ENCODE measurements at regions of chr10 and their contacts with region 1.

Region 1: DNA sequence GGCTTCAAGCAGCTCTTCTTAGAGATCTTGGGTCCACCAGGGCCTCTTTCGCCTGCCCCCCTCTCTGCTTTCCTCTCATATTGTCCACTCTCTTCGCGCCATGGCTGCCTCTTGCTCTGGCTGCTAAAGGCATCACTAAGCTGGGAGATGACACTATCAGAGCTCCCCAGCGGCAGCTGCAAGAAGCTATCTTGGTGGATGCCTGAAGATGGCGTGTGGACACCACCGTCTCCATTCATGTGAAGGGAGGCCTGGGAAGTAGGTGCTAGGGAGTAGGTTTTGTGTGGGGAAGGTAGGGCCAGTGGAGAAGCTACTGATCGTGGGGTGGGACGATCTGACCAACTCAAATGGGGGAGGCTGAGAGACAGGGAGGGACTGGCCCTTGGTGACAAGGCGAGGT is 45.9 kb upstream of the PDLIM1 start:
- DNase-seq: no peak
- H3K4me3 ChIP-seq: no peak overlapping the region
- H3K27ac ChIP-seq: no peak overlapping the region
- H3K4me1 ChIP-seq: peaks cover 0 to 6% (median 0%) of the 10 kb centered on the region in 4 experiments; a peak in 1 of 7 replicates
- H3K27me3 ChIP-seq: no peaks in the 10 kb centered on the region
- CTCF ChIP-seq: no peak
- EP300 ChIP-seq: no peak
- POLR2A ChIP-seq: no peak
- RAD21 ChIP-seq: peak in 1 of 2 experiments; percentile 32; a peak in 1 of 4 replicates

Region 2: DNA sequence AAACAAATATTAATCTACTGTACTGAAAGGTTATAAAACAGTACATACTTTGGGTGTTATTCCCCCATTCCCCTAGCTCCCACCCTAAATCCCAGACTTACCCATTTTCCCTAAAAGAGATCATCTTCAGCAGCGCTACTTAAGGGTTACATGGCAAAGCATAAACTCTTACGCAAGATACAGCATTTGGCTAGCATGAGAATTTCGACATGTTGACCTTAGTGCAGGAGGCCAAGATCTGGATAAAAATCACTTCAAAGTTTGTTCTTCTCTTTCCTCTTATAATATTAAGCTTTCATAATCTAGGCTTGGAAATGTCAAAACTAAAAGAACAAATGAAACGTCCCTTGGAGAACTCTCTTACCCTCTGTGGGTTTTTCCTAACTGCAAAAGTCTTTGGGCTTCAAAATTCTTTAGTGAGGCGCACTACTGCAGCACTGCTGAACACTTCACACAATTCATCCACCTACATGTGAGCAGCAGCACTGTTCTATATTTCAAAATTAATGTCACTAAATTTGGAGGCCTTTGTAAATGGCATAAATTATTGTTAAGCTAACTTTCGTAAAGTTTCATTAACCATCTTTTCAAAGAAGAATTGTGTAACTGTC is 13.6 kb after region 1 on chr10:
- CTCF ChIA-PET with region 1: interaction called, 11 read pairs
- POLR2A ChIA-PET with region 1: no interaction called
- DNase-seq: no peak
- H3K4me3 ChIP-seq: no peak overlapping the region
- H3K27ac ChIP-seq: no peak overlapping the region
- H3K4me1 ChIP-seq: peaks cover 0 to 2% (median 0%) of the 10 kb centered on the region in 4 experiments; a peak in 1 of 7 replicates
- H3K27me3 ChIP-seq: no peaks in the 10 kb centered on the region
- CTCF ChIP-seq: no peak
- EP300 ChIP-seq: no peak
- POLR2A ChIP-seq: no peak
- RAD21 ChIP-seq: no peak